ENCODE measurements at regions of chr12 and their contacts with region 1.

Region 1: DNA sequence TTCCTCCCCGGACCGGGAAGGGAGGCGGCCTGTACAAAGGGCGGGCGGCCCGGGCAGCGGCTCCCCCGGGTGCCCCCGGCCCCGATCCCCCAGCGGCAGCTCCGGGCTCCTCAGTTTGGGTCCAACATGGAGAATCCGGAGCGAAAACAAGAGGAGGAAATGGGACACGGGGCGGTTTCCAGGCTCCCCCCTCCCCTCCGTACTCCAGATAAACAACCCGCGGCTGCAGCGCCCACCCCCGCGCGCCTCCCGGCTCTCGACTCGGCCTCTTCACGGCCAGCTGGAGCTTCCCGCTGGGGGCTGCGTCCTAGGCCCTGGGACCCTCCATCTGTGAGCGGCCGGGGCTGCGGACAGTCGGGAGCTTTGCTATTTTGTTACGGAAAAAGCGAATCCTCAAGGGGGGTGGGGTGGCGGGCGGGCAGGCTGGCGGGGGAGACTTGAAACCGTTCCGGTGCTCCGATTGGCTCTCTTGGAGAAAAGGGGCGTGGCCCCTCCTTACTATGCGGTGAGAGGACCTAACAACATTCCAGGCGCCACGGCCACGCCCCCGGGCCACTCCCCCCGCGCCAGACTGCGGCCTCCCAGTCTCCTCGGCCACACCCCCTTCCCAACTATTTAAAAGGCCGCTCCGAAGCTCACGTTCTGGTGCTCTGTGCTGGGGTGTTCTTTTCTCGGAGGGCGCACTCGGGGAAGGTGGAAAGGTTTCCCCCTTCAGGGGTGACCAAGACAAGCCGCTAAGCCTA is at the start of gene CTDSP2:
- DNase-seq: peak; percentile 96
- H3K4me3 ChIP-seq: peak within 1 kb of the TSS; percentile 97
- H3K27ac ChIP-seq: peak within 1 kb of the TSS; percentile 98
- H3K27me3 ChIP-seq: no peaks in the 10 kb centered on the region
- CTCF ChIP-seq: no peak
- polyA plus RNA-seq, gene CTDSP2: 292 and 305 TPM in 2 replicates

Region 2: GRCh38 chr12:57793920-57794319 is 52.8 kb before region 1 on chr12:
- CTCF ChIA-PET with region 1: no interaction called
- POLR2A ChIA-PET with region 1: interaction called, 12 read pairs
- DNase-seq: no peak
- H3K4me3 ChIP-seq: no peak overlapping the region
- H3K27ac ChIP-seq: no peak overlapping the region
- H3K27me3 ChIP-seq: no peaks in the 10 kb centered on the region
- CTCF ChIP-seq: no peak

Region 3: GRCh38 chr12:57803319-57803893 is 43.3 kb before region 1 on chr12:
- CTCF ChIA-PET with region 1: interaction called, 11 read pairs
- POLR2A ChIA-PET with region 1: interaction called, 3 read pairs
- DNase-seq: no peak
- H3K4me3 ChIP-seq: no peak overlapping the region
- H3K27ac ChIP-seq: no peak overlapping the region
- H3K27me3 ChIP-seq: no peaks in the 10 kb centered on the region
- CTCF ChIP-seq: peak; percentile 86

Region 4: DNA sequence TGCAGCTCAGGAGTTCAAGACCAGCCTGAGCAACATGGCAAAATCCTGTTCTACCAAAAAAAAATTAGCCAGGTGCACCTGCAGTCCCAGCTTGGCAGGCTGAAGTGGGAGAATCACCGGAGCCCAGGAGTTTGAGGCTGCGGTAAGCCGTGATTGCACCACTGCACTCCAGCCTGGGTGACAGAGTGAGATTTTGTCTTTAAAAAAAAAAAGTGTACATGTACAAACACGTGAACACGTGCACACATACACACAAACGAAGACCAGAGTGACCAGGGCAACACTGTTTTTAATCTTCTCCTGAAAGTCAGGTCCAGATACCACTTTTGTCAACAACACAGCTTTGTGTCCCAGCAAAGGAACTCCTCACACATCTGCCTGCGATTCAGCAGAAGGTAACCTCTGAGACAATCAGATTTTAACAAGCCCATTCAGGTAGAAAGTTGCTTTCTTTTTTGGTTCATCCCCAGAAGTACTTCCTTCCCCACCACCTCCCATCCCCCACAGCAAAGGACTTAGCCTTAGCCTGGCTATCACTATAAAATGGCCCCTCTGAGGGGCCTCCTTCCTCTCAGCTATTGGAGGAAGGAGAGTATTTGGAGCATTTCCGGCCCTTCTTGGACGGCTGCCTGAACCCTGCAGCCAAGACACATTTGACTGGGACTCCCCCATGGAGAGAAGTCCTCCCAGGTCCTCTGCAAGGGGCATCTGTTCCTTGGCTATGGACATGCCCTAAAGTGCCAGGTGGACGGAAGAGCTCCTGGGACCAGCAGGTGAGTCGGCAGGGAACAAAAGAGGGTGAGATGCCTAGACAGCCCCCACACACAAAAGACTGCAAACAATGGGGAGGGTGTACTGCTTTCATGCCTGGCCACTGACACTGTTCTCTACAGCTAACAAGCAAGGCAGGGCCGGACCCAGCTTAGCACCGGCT is 10.0 kb before region 1 on chr12:
- CTCF ChIA-PET with region 1: interaction called, 16 read pairs
- POLR2A ChIA-PET with region 1: interaction called, 32 read pairs
- DNase-seq: peak; percentile 46
- H3K4me3 ChIP-seq: peak overlapping the region; percentile 45
- H3K27ac ChIP-seq: peak overlapping the region; percentile 48
- H3K27me3 ChIP-seq: no peaks in the 10 kb centered on the region
- CTCF ChIP-seq: no peak

Region 5: GRCh38 chr12:57865090-57865751 is 18.5 kb after region 1 on chr12:
- CTCF ChIA-PET with region 1: interaction called, 3 read pairs
- POLR2A ChIA-PET with region 1: interaction called, 78 read pairs
- DNase-seq: no peak
- H3K4me3 ChIP-seq: peak overlapping the region; percentile 55
- H3K27ac ChIP-seq: peak overlapping the region; percentile 90
- H3K27me3 ChIP-seq: no peaks in the 10 kb centered on the region
- CTCF ChIP-seq: no peak

Region 6: GRCh38 chr12:57888409-57889157 is 41.8 kb after region 1 on chr12:
- CTCF ChIA-PET with region 1: interaction called, 3 read pairs
- POLR2A ChIA-PET with region 1: interaction called, 114 read pairs
- DNase-seq: no peak
- H3K4me3 ChIP-seq: peak overlapping the region; percentile 33
- H3K27ac ChIP-seq: peak overlapping the region; percentile 89
- H3K27me3 ChIP-seq: no peaks in the 10 kb centered on the region
- CTCF ChIP-seq: no peak

Region 7: DNA sequence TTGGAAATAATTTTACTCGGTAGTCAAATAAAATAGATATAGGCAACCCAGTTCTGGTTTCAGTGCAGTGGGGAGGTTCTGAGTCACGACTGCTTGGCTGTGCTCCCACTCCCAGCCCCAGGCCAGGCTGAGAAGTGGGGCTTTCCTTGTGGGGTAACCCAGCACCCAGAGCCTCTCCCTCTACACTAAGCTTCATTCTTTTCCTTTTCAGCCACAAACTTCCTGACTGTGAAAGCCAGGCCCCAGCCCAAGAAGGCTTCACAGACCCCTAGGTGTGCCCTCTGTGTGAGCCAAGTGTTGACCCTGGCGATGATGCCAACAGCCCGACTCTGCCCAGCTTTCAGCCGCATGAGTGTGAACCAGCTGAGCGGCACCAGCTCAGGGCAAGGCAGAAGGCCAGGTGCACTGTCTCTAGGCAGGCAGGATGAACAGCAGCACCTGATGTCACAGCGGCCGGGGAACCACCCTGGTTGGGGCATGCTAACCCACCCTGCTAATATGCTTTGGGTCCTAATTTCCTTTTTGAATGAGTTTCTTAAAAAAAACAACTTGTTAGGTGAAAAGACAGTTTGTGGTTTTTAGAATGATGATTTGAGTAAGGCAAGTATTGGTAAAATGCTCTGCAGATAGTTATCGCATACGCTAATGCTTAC is 52.4 kb after region 1 on chr12:
- CTCF ChIA-PET with region 1: interaction called, 44 read pairs
- POLR2A ChIA-PET with region 1: interaction called, 114 read pairs
- DNase-seq: peak; percentile 51
- H3K4me3 ChIP-seq: no peak overlapping the region
- H3K27ac ChIP-seq: peak overlapping the region; percentile 92
- H3K27me3 ChIP-seq: no peaks in the 10 kb centered on the region
- CTCF ChIP-seq: no peak

Region 8: DNA sequence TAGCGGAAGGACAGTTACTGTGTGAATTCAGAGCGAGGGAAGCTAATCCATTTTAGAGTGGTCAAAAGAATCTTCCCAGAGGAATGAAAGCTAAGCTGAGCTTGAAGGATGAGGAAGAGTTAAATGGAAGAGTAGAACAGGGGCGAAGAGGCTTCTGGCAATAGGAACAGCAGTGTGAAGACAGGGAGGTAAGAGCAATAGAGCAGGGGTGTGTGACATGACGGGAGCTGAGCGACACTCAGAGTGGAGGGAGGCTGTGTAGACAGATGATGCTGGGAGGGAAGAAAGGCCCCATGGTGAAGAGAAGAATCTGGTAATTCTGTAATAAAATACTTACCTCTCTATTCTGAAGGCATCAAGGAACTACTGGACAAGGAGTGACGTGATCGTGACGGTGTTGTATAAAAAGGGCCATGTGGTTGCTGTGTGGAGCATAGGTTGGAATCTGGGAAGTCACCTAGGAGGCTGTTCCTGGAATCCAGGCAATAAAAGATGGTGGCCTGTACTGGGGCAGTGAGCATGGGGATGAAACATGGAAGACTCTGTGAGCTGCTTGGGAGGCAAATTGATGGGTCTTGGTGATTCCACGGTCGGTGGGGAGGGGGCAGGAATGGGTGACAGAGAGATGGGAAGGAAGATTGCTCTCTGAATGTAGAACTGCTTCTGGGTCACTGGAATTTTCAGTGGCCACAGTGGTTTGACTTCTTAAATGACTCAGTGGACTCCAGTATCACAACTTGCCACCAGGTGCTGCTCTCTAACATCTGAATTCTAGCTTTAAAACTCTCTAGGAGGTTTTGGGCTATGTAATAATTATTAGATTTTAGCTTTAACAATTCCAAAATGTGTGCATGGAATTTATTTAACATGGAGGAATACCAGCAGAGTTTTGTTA is 258.7 kb after region 1 on chr12:
- CTCF ChIA-PET with region 1: no interaction called
- POLR2A ChIA-PET with region 1: no interaction called
- DNase-seq: no peak
- H3K4me3 ChIP-seq: no peak overlapping the region
- H3K27ac ChIP-seq: no peak overlapping the region
- H3K27me3 ChIP-seq: no peaks in the 10 kb centered on the region
- CTCF ChIP-seq: peak; percentile 51

Measured in AG04450 (cell line).